CD8-positive, alpha-beta T cell (primary cell): ENCODE measurements at regions of chr5 and their contacts with region 1.

Region 1: GRCh38 chr5:140174465-140175366 is at the start of gene CYSTM1:
- DNase-seq: peak; percentile 92 to 98 (median 96)
- ATAC-seq: peak; percentile 83
- H3K4me3 ChIP-seq: peak within 1 kb of the TSS; percentile 68 to 83
- H3K4me3 Mint-ChIP-seq: peak within 1 kb of the TSS; percentile 91
- H3K27ac ChIP-seq: peak within 1 kb of the TSS; percentile 79 to 88
- H3K27ac Mint-ChIP-seq: peak within 1 kb of the TSS; percentile 95
- H3K4me1 ChIP-seq: peaks cover 9% of the 10 kb centered on the region
- H3K4me1 Mint-ChIP-seq: peaks cover 13% of the 10 kb centered on the region
- H3K27me3 ChIP-seq: peaks cover 0 to 2% of the 10 kb centered on the region in 2 experiments
- H3K27me3 Mint-ChIP-seq: peaks cover 5% of the 10 kb centered on the region
- CTCF ChIP-seq: no peak
- total RNA-seq, gene CYSTM1: 8.1 to 8.6 TPM

Region 2: DNA sequence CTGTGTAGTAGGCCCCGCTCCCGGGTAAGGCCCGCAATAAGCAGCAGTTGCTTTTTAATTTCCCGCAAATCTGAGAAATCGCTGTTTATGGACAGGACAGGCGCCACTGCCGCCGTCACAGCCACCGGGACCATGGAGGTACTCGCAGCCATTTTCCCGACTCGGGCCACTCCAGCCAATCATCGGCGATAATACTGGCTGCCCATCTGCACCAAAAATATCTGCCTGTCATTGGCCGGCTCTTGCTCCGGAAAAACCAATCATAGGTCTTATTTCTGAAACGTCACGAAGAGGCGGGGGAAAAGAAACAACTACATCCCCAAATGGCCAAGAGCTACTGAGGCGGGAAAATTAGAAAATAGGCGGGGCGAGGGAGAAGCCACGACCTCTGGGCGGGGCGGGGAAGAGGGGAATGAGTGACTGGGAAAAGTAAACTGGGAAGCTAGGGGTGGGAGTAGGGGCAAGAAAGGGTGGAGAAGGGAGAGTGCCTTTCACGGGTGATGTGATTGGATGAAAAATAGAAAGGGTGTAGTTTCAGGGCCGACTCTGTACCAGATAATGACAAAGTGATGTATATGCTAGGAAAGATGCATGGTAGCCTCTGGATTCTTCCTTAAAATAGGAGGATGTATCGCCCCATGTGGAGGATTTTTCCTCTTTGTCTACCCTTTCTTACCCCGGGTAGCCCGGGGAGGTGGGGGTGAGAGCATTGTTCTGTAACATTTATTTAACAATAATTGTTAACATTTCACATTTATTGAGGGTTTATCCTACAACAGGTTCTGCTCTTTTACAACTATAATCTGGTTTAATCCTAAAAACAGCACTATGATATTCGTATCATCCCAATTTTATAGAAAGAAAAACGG is 1961.3 kb before region 1 on chr5 and contains the start of gene CDC23:
- CTCF ChIA-PET with region 1: no interaction called
- POLR2A ChIA-PET with region 1: no interaction called
- intact Hi-C with region 1: loop called in 1 of 2 experiments (anchors 2 kb)
- DNase-seq: peak; percentile 76 to 97 (median 89)
- ATAC-seq: peak; percentile 97
- H3K4me3 ChIP-seq: peak within 1 kb of the TSS; percentile 91 to 93
- H3K4me3 Mint-ChIP-seq: peak within 1 kb of the TSS; percentile 100
- H3K27ac ChIP-seq: peak within 1 kb of the TSS; percentile 81 to 86
- H3K27ac Mint-ChIP-seq: peak within 1 kb of the TSS; percentile 98
- H3K4me1 ChIP-seq: peaks cover 18% of the 10 kb centered on the region
- H3K4me1 Mint-ChIP-seq: peaks cover 21% of the 10 kb centered on the region
- H3K27me3 ChIP-seq: no peaks in the 10 kb centered on the region
- H3K27me3 Mint-ChIP-seq: peaks cover 2% of the 10 kb centered on the region
- CTCF ChIP-seq: no peak
- total RNA-seq, gene CDC23: 18.2 to 20.5 TPM

Region 3: DNA sequence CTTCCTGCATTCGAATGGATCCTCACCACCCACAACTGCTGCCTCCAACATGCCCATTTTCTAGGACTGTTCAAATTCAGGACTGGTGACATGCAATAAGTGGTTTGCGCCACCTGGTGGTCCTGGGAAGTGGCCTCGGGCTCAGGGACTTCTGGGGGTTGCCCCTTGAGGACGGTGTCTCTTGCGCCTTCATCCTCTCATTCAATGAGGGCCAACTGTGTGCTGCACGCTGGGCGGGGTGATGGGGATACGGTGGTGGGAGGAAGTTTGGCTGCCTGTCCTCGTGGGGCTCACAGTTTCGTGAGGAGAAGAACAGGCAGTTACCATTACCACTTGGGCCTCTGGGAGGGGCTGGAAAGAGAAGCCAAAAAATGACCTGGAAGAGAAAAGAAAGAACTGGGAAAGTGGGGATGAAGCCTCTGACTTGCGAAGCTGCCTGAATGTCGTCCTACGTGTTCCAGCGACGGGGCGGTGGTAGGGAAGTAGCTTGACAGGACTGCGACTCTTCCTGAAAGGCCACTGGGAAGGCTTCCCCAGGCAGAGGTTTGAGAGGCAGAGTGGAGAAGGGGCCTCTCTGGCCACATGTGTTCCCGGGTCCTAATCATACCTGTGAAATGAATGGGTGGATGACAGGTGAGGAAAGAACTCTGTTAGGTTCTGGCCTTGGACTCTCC is 330.1 kb before region 1 on chr5:
- CTCF ChIA-PET with region 1: no interaction called
- POLR2A ChIA-PET with region 1: no interaction called
- intact Hi-C with region 1: loop called in 1 of 2 experiments (anchors 10 kb)
- DNase-seq: peak; percentile 50 to 83 (median 77)
- ATAC-seq: peak; percentile 24
- H3K4me3 ChIP-seq: no peak overlapping the region
- H3K4me3 Mint-ChIP-seq: no peak overlapping the region
- H3K27ac ChIP-seq: no peak overlapping the region
- H3K27ac Mint-ChIP-seq: no peak overlapping the region
- H3K4me1 ChIP-seq: no peaks in the 10 kb centered on the region
- H3K4me1 Mint-ChIP-seq: peaks cover 15% of the 10 kb centered on the region
- H3K27me3 ChIP-seq: no peaks in the 10 kb centered on the region
- H3K27me3 Mint-ChIP-seq: peaks cover 18% of the 10 kb centered on the region
- CTCF ChIP-seq: peak; percentile 76

Region 4: GRCh38 chr5:140157032-140157803 is 17.5 kb before region 1 on chr5:
- CTCF ChIA-PET with region 1: interaction called, 8 read pairs
- POLR2A ChIA-PET with region 1: no interaction called
- intact Hi-C with region 1: loop called in 1 of 2 experiments (anchors 1 kb)
- DNase-seq: peak; percentile 74 to 91 (median 87)
- ATAC-seq: peak; percentile 100
- H3K4me3 ChIP-seq: no peak overlapping the region
- H3K4me3 Mint-ChIP-seq: peak overlapping the region; percentile 46
- H3K27ac ChIP-seq: no peak overlapping the region
- H3K27ac Mint-ChIP-seq: no peak overlapping the region
- H3K4me1 ChIP-seq: peaks cover 4% of the 10 kb centered on the region
- H3K4me1 Mint-ChIP-seq: peaks cover 6% of the 10 kb centered on the region
- H3K27me3 ChIP-seq: no peaks in the 10 kb centered on the region
- H3K27me3 Mint-ChIP-seq: peaks cover under 1% of the 10 kb centered on the region
- CTCF ChIP-seq: peak; percentile 81

Region 5: DNA sequence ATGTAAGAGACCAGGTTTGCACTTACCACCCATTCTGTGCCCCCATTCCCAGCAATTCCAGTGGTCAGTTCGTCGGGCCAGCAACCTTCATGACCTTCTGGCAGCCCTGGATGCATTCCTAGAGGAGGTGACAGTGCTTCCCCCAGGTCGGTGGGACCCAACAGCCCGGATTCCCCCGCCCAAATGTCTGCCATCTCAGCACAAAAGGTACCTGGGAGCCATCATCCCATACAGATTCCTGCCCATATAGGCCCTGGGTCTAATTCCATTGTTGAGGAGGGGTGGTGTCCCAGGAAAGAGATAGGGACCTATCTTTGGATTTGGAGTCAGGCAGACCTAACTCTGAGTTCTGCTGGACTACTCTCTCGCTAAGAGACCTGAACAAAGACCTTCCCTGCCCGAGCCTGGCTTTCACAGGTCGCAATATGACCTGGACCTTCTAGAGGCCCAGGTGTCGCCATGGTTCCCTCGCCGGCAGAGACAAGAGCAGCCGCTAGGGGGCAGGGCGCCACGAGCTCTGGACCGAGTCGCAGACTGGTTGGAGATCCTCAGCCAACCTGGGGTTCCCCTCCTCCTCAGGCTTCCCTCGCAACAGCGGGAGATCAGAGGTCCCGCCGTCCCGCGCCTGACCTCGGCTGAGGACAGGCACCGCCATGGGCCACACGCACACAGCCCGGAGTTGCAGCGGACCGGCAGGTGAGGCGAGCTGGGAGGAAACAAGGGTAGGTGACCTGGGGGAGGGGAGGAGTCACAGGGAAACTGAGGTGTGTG is 188.3 kb after region 1 on chr5:
- CTCF ChIA-PET with region 1: no interaction called
- POLR2A ChIA-PET with region 1: no interaction called
- intact Hi-C with region 1: no loop called
- DNase-seq: peak; percentile 63 to 87 (median 83)
- ATAC-seq: peak; percentile 97
- H3K4me3 ChIP-seq: peak overlapping the region; percentile 28 to 35
- H3K4me3 Mint-ChIP-seq: peak overlapping the region; percentile 77
- H3K27ac ChIP-seq: no peak overlapping the region
- H3K27ac Mint-ChIP-seq: no peak overlapping the region
- H3K4me1 ChIP-seq: peaks cover 5% of the 10 kb centered on the region
- H3K4me1 Mint-ChIP-seq: peaks cover 6% of the 10 kb centered on the region
- H3K27me3 ChIP-seq: no peaks in the 10 kb centered on the region
- H3K27me3 Mint-ChIP-seq: peaks cover 8% of the 10 kb centered on the region
- CTCF ChIP-seq: peak; percentile 94

Region 6: DNA sequence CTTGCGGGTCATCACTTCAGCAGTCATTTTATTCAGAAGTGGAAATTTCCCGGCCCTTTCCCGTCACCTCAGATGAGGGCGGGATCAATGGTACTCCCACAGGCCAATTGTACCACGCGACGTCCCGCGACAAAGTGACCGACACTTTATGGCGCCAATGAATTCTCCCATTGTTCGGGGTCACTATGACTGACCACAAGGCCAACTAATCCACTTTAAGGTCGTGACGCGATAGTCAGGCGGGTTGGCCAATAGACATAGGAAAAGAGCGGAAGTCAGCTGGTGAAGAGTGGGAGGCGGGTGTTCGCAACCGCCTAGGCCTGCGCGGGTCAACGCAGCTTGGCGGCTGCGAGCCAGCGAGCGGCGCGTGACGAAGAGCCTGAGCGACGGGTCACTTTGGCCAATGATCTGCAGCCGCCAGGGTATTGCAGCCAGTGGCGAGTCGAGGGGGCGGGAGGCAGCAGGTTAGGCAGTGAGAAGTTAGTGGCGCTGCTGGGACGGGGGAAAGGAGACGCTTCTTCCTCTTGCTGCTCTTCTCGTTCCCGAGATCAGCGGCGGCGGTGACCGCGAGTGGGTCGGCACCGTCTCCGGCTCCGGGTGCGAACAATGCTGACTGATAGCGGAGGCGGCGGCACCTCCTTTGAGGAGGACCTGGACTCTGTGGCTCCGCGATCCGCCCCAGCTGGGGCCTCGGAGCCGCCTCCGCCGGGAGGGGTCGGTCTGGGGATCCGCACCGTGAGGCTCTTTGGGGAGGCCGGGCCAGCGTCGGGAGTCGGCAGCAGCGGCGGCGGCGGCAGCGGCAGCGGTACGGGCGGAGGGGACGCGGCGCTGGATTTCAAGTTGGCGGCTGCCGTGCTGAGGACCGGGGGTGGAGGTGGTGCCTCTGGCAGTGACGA is 226.9 kb after region 1 on chr5 and contains the start of gene ANKHD1:
- CTCF ChIA-PET with region 1: no interaction called
- POLR2A ChIA-PET with region 1: no interaction called
- intact Hi-C with region 1: loop called in 1 of 2 experiments (anchors 1 kb)
- DNase-seq: peak; percentile 91 to 100 (median 95)
- ATAC-seq: peak; percentile 77
- H3K4me3 ChIP-seq: peak within 1 kb of the TSS; percentile 86 to 92
- H3K4me3 Mint-ChIP-seq: no peak within 1 kb of the TSS
- H3K27ac ChIP-seq: peak within 1 kb of the TSS; percentile 89 to 90
- H3K27ac Mint-ChIP-seq: peak within 1 kb of the TSS; percentile 91
- H3K4me1 ChIP-seq: peaks cover 37% of the 10 kb centered on the region
- H3K4me1 Mint-ChIP-seq: peaks cover 36% of the 10 kb centered on the region
- H3K27me3 ChIP-seq: no peaks in the 10 kb centered on the region
- H3K27me3 Mint-ChIP-seq: no peaks in the 10 kb centered on the region
- CTCF ChIP-seq: no peak
- total RNA-seq, gene ANKHD1: 209 to 212 TPM

Region 7: GRCh38 chr5:140632150-140633020 is 457.7 kb after region 1 on chr5:
- CTCF ChIA-PET with region 1: no interaction called
- POLR2A ChIA-PET with region 1: no interaction called
- intact Hi-C with region 1: loop called in 1 of 2 experiments (anchors 5 kb)
- DNase-seq: peak in 8 of 9 experiments; percentile 20 to 74 (median 52)
- ATAC-seq: peak; percentile 80
- H3K4me3 ChIP-seq: peak overlapping the region; percentile 53 to 84
- H3K4me3 Mint-ChIP-seq: peak overlapping the region; percentile 90
- H3K27ac ChIP-seq: peak overlapping the region in 1 of 2 experiments; percentile 48
- H3K27ac Mint-ChIP-seq: peak overlapping the region; percentile 74
- H3K4me1 ChIP-seq: peaks cover 15% of the 10 kb centered on the region
- H3K4me1 Mint-ChIP-seq: peaks cover 26% of the 10 kb centered on the region
- H3K27me3 ChIP-seq: no peaks in the 10 kb centered on the region
- H3K27me3 Mint-ChIP-seq: peaks cover 8% of the 10 kb centered on the region
- CTCF ChIP-seq: no peak

Region 8: DNA sequence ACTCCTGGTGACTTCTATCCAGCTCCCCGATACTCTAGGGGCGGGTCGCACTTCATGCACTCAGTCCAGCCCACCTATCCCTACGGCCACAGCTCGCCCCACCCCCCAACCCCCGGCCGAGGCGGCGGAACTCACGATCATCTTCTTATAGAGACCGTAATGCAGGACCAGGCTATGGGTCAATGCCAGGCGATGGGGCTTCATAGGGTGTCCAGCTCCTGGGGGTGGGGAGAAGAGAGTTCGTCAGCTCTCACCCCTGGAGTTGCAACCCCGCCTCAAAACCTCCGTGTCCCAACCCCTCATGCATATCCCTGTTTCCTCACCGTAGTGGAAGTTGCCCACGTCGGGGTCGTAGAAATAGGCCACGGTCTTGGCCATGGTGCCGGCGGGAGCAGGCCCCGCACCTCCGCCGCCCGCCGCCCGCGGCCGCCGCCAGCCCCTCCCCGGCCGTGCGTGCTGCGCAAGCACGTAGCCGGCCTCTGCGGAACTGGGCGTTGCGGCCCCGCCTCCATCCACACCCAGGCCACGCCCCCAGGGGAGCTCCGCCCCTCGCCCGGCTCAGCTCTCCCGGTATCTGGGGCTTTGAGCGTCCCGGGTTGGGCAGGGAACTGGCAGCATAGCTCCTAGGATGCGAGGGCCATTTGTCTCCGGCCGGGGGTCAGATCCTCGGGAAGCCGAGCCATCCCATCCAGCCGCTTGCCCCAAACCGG is 1461.9 kb after region 1 on chr5 and contains the starts of genes HDAC3 and RELL2:
- CTCF ChIA-PET with region 1: no interaction called
- POLR2A ChIA-PET with region 1: no interaction called
- intact Hi-C with region 1: loop called in 1 of 2 experiments (anchors 5 kb)
- DNase-seq: peak; percentile 88 to 97 (median 94)
- ATAC-seq: peak; percentile 89
- H3K4me3 ChIP-seq: peak within 1 kb of the TSS; percentile 98 to 99
- H3K4me3 Mint-ChIP-seq: peak within 1 kb of the TSS; percentile 92
- H3K27ac ChIP-seq: peak within 1 kb of the TSS; percentile 78 to 81
- H3K27ac Mint-ChIP-seq: peak within 1 kb of the TSS; percentile 89
- H3K4me1 ChIP-seq: peaks cover 28% of the 10 kb centered on the region
- H3K4me1 Mint-ChIP-seq: peaks cover 50% of the 10 kb centered on the region
- H3K27me3 ChIP-seq: no peaks in the 10 kb centered on the region
- H3K27me3 Mint-ChIP-seq: no peaks in the 10 kb centered on the region
- CTCF ChIP-seq: no peak
- total RNA-seq, gene HDAC3: 48.9 to 54.8 TPM
- total RNA-seq, gene RELL2: 9.5 to 9.8 TPM